Mucosa of descending colon (tissue), 3 donors: ENCODE measurements at regions of chr5 and their contacts with region 1.

Region 1: DNA sequence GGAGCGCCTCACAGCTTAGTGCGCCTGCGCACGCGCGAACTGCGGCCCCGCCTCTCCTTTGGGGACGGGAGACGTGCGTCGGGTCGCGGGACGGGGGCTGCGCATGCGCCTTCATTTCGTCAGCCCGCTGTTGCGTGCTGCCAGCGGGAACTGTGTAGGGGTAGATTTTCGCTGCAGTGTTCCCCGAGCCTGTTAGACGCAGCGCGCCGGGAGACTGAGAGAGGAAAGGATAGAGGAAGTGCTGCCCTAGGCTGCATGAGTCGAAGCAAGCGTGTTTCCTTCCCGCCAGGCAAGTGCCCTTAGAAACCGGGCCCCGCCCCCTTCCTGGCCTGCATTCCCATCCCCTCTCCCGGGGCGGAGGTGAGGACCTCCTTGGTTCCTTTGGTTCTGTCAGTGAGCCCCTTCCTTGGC is 12.3 kb downstream of the ITGA1 start:
- DNase-seq: peak; percentile 95 to 97 (median 97)
- ATAC-seq: peak; percentile 95
- H3K4me3 ChIP-seq: peak overlapping the region; percentile 44
- H3K4me1 ChIP-seq: peaks cover 38% of the 10 kb centered on the region
- CTCF ChIP-seq: no peak

Region 2: GRCh38 chr5:52893105-52893504 is 93.1 kb after region 1 on chr5:
- intact Hi-C with region 1: loop called in 1 of 2 experiments (anchors 10 kb)
- DNase-seq: no peak
- ATAC-seq: peak; percentile 37
- H3K4me3 ChIP-seq: no peak overlapping the region
- H3K4me1 ChIP-seq: no peaks in the 10 kb centered on the region
- CTCF ChIP-seq: no peak